ENCODE measurements at regions of chr3 and their contacts with region 1.

Region 1: GRCh38 chr3:59049671-59050331 is at the start of gene CFAP20DC:
- DNase-seq: peak; percentile 8
- ATAC-seq: peak; percentile 67
- H3K4me3 ChIP-seq: peak within 1 kb of the TSS in 1 of 3 experiments; percentile 7; a peak in 1 of 6 replicates
- H3K27ac ChIP-seq: no peak within 1 kb of the TSS
- H3K4me1 ChIP-seq: no peaks in the 10 kb centered on the region
- H3K27me3 ChIP-seq: no peaks in the 10 kb centered on the region; a peak in 1 of 5 replicates
- CTCF ChIP-seq: no peak
- EP300 ChIP-seq: no peak
- POLR2A ChIP-seq: no peak
- RAD21 ChIP-seq: no peak
- total RNA-seq, gene CFAP20DC: not detected in 2 replicates

Region 2: DNA sequence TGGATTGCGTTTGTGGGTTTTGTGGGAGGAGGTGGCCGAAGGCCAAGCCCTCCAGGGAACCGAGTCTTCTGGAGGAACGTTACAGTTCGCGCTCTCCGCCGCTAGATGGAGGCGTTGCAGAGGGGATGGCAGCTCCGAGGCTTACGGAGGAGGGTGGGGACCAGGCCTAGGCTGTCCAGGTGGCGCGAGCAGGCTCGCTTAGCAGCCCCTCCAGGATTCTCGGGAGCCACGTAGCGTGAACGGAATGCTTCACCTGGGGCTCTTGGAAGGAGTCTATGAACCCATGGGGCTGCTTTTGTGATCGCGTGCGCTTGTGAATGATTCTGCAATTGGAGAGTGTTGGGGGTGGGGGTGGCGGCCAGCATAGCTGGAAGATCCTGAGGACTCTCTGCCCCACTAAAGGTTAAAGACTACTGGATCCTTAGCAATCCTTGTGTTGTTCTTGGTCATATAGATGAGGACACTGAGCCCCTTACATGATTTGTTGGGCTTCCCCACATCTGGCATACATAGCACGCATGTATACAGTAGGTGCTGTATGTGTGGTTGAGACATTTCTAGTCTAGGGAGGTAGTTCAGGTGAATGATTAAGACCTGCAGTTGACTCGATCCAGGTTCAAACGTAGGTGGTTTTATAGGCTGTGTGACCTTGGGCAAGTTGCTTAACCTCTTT is 409.0 kb before region 1 on chr3:
- CTCF ChIA-PET with region 1: interaction called, 9 read pairs
- POLR2A ChIA-PET with region 1: no interaction called
- in situ Hi-C with region 1: loop called (anchors 5 kb)
- intact Hi-C with region 1: no loop called
- DNase-seq: peak; percentile 56
- ATAC-seq: peak; percentile 95
- H3K4me3 ChIP-seq: no peak overlapping the region
- H3K27ac ChIP-seq: no peak overlapping the region
- H3K4me1 ChIP-seq: no peaks in the 10 kb centered on the region
- H3K27me3 ChIP-seq: peaks cover 4 to 27% of the 10 kb centered on the region in 2 experiments; a peak in 3 of 5 replicates
- CTCF ChIP-seq: peak; percentile 97
- EP300 ChIP-seq: no peak
- POLR2A ChIP-seq: no peak
- RAD21 ChIP-seq: peak; percentile 91

Region 3: GRCh38 chr3:58824285-58824684 is 225.5 kb before region 1 on chr3:
- CTCF ChIA-PET with region 1: interaction called, 3 read pairs
- POLR2A ChIA-PET with region 1: no interaction called
- in situ Hi-C with region 1: no loop called
- intact Hi-C with region 1: loop called (anchors 2 kb)
- DNase-seq: peak; percentile 30
- ATAC-seq: peak; percentile 60; the same call in 2 of the 3 replicates
- H3K4me3 ChIP-seq: no peak overlapping the region
- H3K27ac ChIP-seq: no peak overlapping the region
- H3K4me1 ChIP-seq: peaks cover 11% of the 10 kb centered on the region
- H3K27me3 ChIP-seq: no peaks in the 10 kb centered on the region; a peak in 1 of 5 replicates
- CTCF ChIP-seq: peak; percentile 64
- EP300 ChIP-seq: no peak
- POLR2A ChIP-seq: no peak
- RAD21 ChIP-seq: no peak

Region 4: GRCh38 chr3:58994746-58995330 is 55.0 kb before region 1 on chr3:
- CTCF ChIA-PET with region 1: interaction called, 4 read pairs
- POLR2A ChIA-PET with region 1: no interaction called
- in situ Hi-C with region 1: no loop called
- intact Hi-C with region 1: loop called (anchors 2 kb)
- DNase-seq: peak; percentile 39
- ATAC-seq: 0 out of 3 replicates have a peak, but pooled peaks have one; percentile 30
- H3K4me3 ChIP-seq: no peak overlapping the region
- H3K27ac ChIP-seq: no peak overlapping the region
- H3K4me1 ChIP-seq: no peaks in the 10 kb centered on the region
- H3K27me3 ChIP-seq: no peaks in the 10 kb centered on the region; a peak in 1 of 5 replicates
- CTCF ChIP-seq: peak; percentile 57
- EP300 ChIP-seq: no peak
- POLR2A ChIP-seq: no peak
- RAD21 ChIP-seq: no peak